ENCODE measurements at regions of chr22 and their contacts with region 1.

Region 1: DNA sequence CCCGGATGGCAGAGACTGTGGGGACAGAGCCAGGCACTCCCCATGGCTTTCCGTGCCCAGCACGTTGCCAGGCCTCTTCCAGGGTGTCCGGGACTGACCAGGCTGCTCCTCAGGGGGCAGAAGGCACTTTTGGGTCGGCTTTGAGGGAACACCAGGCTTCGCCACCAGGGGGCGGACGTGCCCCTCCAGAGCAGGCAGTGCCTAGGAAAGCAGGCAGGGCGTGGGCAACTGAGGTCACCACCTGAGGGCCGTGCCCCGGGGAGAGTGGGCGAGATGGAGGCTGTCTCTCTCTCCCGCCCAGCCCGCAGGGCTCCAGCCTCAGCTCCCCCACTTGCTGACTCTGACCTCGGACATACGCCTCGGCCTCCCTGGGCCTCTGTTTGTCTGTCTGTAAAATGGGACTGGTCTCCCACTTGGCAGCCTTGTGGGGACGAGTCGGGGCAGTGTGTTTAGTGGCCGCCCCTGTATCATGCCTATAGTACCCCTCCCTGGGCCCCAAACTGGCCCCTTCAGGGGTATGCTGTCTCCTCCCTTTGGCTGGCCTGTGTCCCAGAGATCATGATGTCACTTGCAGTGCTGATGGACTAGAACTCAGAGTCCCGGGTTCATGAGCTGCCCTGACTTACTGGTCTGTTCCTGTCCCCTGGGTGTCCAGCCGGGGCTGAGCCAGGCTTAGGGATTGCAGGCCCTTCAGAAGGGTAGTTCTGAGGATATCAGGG is 4.4 kb upstream of the PRR5 start:
- DNase-seq: peak; percentile 87
- CTCF ChIP-seq: peak; percentile 95

Region 2: GRCh38 chr22:44743804-44744211 is 46.2 kb after region 1 on chr22:
- in situ Hi-C with region 1: loop called (anchors 10 kb)
- DNase-seq: no peak
- CTCF ChIP-seq: no peak